Naive thymus-derived CD4-positive, alpha-beta T cell (primary cell): ENCODE measurements at regions of chr10 and their contacts with region 1.

Region 1: DNA sequence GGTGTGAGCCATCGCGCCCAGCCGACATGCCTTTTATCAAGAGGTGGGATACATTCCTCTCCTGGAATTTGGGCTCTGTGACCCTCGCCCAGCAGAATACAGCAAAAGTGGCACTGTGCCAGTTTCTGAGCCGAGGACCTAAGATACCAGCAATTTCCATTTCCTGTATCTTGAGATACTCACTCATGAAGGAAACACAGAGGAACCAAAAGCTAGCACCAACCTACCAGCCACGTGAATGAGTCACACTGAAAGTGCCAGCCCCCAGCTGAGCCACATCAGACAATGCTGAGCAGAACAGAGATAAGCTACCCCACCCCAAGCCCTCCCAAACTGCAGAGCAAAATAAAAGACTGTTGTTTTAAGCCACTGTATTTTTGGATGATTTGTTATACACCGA is 56.3 kb downstream of the CACUL1 start:
- DNase-seq: peak; percentile 35 to 92 (median 88)
- ATAC-seq: peak; percentile 100
- H3K4me3 ChIP-seq: peak overlapping the region; percentile 18
- H3K4me3 Mint-ChIP-seq: peak overlapping the region; percentile 71 to 93 (median 83)
- H3K27ac ChIP-seq: peak overlapping the region; percentile 57
- H3K27ac Mint-ChIP-seq: peak overlapping the region; percentile 73 to 95 (median 90)
- H3K4me1 ChIP-seq: peaks cover 15 to 40% of the 10 kb centered on the region in 2 donors
- H3K4me1 Mint-ChIP-seq: peaks cover 29 to 89% (median 74%) of the 10 kb centered on the region in 7 donors
- H3K27me3 ChIP-seq: no peaks in the 10 kb centered on the region
- H3K27me3 Mint-ChIP-seq: no peaks in the 10 kb centered on the region

Region 2: GRCh38 chr10:118568327-118568848 is 130.0 kb before region 1 on chr10:
- CTCF ChIA-PET with region 1: interaction called, 4 read pairs
- POLR2A ChIA-PET with region 1: no interaction called
- intact Hi-C with region 1: loop called in 1 of 2 experiments (anchors 1 kb)
- DNase-seq: peak; percentile 11 to 80 (median 71)
- ATAC-seq: peak; percentile 80
- H3K4me3 ChIP-seq: no peak overlapping the region
- H3K4me3 Mint-ChIP-seq: peak overlapping the region in 6 of 10 donors; percentile 32 to 69 (median 58)
- H3K27ac ChIP-seq: no peak overlapping the region
- H3K27ac Mint-ChIP-seq: peak overlapping the region in 3 of 9 donors; percentile 17 to 47 (median 36)
- H3K4me1 ChIP-seq: no peaks in the 10 kb centered on the region
- H3K4me1 Mint-ChIP-seq: peaks cover 2 to 19% (median 11%) of the 10 kb centered on the region in 7 donors
- H3K27me3 ChIP-seq: no peaks in the 10 kb centered on the region
- H3K27me3 Mint-ChIP-seq: peaks cover 0 to 10% (median 0%) of the 10 kb centered on the region in 5 donors

Region 3: GRCh38 chr10:118662228-118663035 is 36.0 kb before region 1 on chr10:
- CTCF ChIA-PET with region 1: interaction called, 6 read pairs
- POLR2A ChIA-PET with region 1: interaction called, 8 read pairs
- intact Hi-C with region 1: loop called in 1 of 2 experiments (anchors 1 kb)
- DNase-seq: peak in 7 of 9 donors; percentile 21 to 69 (median 49)
- ATAC-seq: peak; percentile 53
- H3K4me3 ChIP-seq: peak overlapping the region; percentile 27
- H3K4me3 Mint-ChIP-seq: peak overlapping the region in 9 of 10 donors; percentile 56 to 85 (median 69)
- H3K27ac ChIP-seq: no peak overlapping the region
- H3K27ac Mint-ChIP-seq: peak overlapping the region in 8 of 9 donors; percentile 69 to 94 (median 80)
- H3K4me1 ChIP-seq: peaks cover 19 to 58% of the 10 kb centered on the region in 2 donors
- H3K4me1 Mint-ChIP-seq: peaks cover 35 to 91% (median 74%) of the 10 kb centered on the region in 7 donors
- H3K27me3 ChIP-seq: no peaks in the 10 kb centered on the region
- H3K27me3 Mint-ChIP-seq: peaks cover 0 to 14% (median 0%) of the 10 kb centered on the region in 5 donors

Region 4: GRCh38 chr10:118720685-118721538 is 22.5 kb after region 1 on chr10:
- CTCF ChIA-PET with region 1: interaction called, 10 read pairs
- POLR2A ChIA-PET with region 1: interaction called, 6 read pairs
- intact Hi-C with region 1: loop called in 1 of 2 experiments (anchors 1 kb)
- DNase-seq: peak; percentile 15 to 75 (median 64)
- ATAC-seq: peak; percentile 78
- H3K4me3 ChIP-seq: no peak overlapping the region
- H3K4me3 Mint-ChIP-seq: no peak overlapping the region
- H3K27ac ChIP-seq: no peak overlapping the region
- H3K27ac Mint-ChIP-seq: peak overlapping the region in 1 of 9 donors; percentile 21
- H3K4me1 ChIP-seq: peaks cover 0 to 8% of the 10 kb centered on the region in 2 donors
- H3K4me1 Mint-ChIP-seq: peaks cover 6 to 36% (median 24%) of the 10 kb centered on the region in 7 donors
- H3K27me3 ChIP-seq: no peaks in the 10 kb centered on the region
- H3K27me3 Mint-ChIP-seq: no peaks in the 10 kb centered on the region

Region 5: GRCh38 chr10:119502209-119502608 is 803.8 kb after region 1 on chr10:
- CTCF ChIA-PET with region 1: no interaction called
- POLR2A ChIA-PET with region 1: no interaction called
- intact Hi-C with region 1: loop called in 1 of 2 experiments (anchors 10 kb)
- DNase-seq: peak; percentile 50 to 93 (median 91)
- ATAC-seq: peak; percentile 91
- H3K4me3 ChIP-seq: peak overlapping the region; percentile 46
- H3K4me3 Mint-ChIP-seq: peak overlapping the region; percentile 70 to 85 (median 82)
- H3K27ac ChIP-seq: peak overlapping the region; percentile 98
- H3K27ac Mint-ChIP-seq: peak overlapping the region; percentile 95 to 100 (median 99)
- H3K4me1 ChIP-seq: peaks cover 39 to 88% of the 10 kb centered on the region in 2 donors
- H3K4me1 Mint-ChIP-seq: peaks cover 56 to 98% (median 92%) of the 10 kb centered on the region in 7 donors
- H3K27me3 ChIP-seq: no peaks in the 10 kb centered on the region
- H3K27me3 Mint-ChIP-seq: no peaks in the 10 kb centered on the region